GM18951 (cell line): ENCODE measurements at regions of chr7 and their contacts with region 1.

Region 1: GRCh38 chr7:15305002-15305600 is 256.7 kb downstream of the AGMO start:
- POLR2A ChIP-seq: no peak

Region 2: DNA sequence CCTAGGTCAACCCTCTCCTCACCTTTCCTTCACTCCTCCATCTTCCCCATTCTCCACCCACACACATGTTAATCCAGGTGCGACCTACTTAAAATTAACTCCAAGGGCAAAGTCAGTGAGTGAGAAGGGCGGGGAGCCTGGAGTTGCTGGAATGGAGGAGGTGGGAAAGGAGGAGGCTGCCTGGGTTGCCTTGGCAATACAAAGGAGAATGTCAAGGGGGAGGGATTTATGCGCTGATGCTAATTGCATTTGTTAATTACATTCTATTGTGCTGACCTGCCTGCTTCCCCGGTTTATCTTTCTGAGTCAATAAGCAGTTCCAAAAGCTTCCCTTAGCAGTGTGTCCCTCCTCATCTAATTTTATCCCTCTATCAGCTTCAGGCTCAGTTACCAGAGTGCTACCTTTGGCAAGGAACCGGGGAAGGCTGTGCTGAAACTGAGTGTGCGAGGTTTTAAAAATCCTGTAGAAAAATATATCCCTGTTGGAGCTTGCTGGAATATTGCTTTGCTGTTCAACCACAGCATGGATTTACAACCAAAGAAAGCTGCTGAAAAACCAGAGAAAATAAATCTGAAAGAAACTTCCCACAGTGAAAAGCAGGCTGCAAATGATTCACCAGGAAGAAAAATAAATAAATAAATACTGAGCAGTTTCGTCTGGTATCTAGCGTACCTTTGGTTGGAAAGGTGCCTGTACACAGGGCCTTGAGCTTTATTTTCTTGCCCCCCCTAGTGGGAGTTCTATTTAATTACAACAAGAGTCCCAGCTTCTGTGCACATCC is 289.4 kb before region 1 on chr7:
- in situ Hi-C with region 1: no loop called
- POLR2A ChIP-seq: no peak

Region 3: DNA sequence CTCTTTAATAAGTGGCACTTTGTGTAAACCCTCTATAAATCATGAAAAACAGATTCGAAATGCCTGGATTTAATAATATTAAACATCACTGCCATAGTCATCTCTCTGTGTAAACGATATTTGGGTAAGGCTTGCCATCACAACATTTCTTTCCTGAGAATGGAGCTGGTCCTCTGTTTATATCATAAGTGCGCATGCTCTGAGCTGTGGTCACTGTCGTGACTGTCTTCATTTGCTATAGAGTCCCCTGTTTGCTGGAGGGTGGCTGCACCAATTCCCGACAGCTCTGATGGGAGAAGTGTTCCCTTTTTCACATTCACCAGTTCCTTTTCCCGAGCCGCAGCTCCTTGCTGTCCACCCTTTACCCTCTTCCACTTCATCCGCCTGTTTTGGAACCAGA is 307.1 kb after region 1 on chr7:
- in situ Hi-C with region 1: no loop called
- POLR2A ChIP-seq: no peak

Region 4: DNA sequence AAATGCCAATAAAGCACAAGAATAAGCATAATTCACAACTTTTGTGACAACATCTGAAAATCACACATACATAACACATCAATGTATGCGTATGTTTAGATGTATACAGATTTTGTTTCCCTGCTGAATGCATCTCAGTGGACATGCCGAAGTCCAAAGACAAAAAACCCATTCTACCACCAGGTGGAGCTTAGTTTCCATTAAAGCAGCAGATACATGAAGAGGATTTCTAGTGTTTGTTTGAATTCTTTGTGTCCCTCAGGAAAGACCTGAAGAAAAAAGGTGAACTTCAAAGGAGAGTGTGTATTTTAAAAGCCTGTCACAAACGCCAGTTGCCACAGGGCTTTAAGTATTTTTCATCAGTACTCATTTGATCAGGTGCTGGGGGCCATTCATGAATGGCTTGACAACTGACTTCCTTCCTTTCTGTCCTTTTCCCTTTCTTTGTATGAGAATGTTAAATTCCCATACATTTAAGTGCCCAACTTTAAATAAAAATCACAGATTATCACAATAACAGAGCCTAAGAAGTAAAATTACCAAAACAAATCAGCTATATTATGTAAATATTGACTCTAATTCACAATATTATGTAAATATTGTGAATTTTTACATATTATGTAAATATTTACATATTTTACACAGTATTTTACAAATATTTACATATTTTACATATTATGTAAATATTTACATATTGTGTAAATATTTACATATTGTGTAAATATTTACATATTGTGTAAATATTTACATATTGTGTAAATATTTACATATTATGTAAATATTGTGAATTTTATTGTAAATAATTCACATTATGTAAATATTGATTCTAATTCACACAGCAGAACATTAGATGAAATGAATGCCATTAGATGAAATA is 773.2 kb after region 1 on chr7:
- in situ Hi-C with region 1: loop called (anchors 25 kb)
- POLR2A ChIP-seq: no peak